Sigmoid colon (tissue), 7 donors: ENCODE measurements at regions of chr1 and their contacts with region 1.

Region 1: DNA sequence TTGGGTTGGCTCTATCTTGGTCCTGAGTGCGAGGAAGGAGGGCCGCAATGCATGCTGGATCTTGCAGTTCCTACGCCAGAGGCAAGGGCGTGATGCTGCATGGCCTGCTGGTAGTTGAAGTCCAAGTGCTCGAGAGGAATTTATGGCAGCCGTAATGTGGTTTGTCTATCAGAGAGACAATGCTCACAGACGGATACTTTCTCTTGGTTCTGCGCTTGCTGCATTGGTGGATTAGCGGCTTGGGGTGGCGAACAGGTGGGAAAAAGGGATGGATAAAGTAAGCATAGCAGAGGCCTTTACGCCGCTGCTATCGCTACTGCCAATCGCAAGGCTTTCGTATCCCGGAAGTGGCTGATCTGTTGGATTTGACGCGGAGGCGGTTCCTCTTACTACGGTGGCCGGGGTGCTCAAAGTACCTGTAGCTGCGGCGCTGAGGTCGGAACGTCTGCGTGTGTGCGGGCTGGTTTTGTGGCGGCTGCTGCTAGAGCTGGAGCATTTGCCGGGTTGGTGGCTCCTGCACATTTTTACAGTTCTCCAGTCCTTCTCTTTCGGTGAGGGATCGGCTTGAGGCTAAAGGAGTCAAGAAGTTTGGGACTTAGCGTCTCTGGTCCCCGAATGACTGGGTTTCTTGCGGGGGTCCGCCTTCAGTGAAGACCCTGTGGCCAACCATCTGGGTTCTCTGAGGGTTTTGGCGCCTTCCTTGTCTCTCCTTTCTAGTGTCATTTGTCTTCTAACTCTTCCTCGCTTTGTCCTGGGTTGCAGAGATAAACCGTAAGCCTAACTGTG is at the start of gene ATG4C:
- DNase-seq: peak; percentile 98
- H3K4me3 ChIP-seq: peak within 1 kb of the TSS; percentile 62 to 78 (median 71)
- H3K27ac ChIP-seq: peak within 1 kb of the TSS; percentile 87 to 95 (median 92)
- H3K4me1 ChIP-seq: peaks cover 0 to 17% (median 8%) of the 10 kb centered on the region in 4 donors
- H3K27me3 ChIP-seq: no peaks in the 10 kb centered on the region
- CTCF ChIP-seq: peak in 3 of 4 experiments; percentile 9 to 31 (median 12)
- EP300 ChIP-seq: no peak
- POLR2A ChIP-seq: peak; percentile 11 to 66
- total RNA-seq, gene ATG4C: 4.8 to 15.5 (median 11.8) TPM

Region 2: DNA sequence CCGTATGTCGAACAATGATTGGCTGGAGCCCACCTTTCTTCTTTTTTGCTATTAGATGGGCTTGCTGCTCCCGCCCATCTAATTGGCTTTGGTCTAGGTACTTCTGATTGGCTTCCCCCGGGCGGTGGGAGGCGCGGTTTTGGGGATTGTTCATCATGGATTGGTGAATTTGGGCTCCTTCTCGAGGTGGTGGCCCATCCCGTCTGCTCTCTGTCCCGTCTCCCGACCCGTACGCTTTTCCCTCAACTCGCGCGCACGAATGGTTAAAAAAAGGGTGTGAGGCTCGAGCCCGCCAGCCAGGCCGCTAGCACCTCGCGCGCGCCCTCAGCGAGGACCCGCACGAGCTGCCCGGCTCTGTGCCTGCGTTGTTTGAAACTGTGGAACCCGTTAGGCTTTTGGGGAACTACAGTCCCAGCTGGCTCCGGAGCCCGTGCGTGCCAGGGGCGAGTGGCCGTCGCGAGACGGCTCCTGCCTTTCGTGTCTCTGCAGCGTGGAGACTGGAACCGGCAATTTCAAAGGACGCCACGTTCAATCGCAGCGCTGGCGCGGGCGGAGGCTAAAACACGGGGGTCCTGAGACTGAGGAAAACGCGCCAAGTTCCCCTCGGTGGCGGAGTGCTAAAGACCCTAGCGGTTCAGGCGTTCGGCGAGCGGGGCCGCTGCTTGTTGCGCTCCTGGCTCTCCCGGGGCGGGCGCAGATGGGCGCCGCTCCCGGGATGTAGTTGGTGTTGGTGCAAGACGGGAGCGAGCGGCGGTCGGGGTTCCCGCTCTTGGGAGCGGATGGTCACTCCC is 347.3 kb before region 1 on chr1 and contains the start of gene USP1:
- intact Hi-C with region 1: loop called (anchors 5 kb)
- DNase-seq: peak; percentile 99
- H3K4me3 ChIP-seq: peak within 1 kb of the TSS; percentile 83 to 96 (median 88)
- H3K27ac ChIP-seq: peak within 1 kb of the TSS; percentile 92 to 100 (median 98)
- H3K4me1 ChIP-seq: peaks cover 0 to 40% (median 31%) of the 10 kb centered on the region in 4 donors
- H3K27me3 ChIP-seq: no peaks in the 10 kb centered on the region
- CTCF ChIP-seq: no peak
- EP300 ChIP-seq: no peak
- POLR2A ChIP-seq: no peak
- total RNA-seq, gene USP1: 20.5 to 35.7 (median 27.6) TPM

Region 3: DNA sequence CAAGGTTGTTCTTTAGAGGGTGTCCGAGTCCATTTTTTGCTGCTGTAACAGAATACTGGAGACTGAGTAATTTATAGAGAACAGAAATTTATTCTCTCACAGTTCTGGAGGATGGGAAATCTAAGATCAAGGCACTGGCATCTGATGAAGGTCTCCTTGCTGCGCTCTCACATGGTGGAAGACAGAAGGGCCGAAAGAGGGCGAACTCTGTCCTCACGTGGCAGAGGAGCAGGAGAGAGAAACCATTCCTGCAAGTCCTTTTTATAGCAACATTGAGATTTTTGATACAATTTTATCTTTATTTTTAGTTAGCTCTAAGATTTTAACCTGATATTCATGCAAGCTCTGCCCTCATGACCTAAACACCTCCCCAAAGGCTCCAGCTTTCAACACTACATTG is 48.4 kb after region 1 on chr1:
- intact Hi-C with region 1: no loop called
- DNase-seq: no peak
- H3K4me3 ChIP-seq: no peak overlapping the region
- H3K27ac ChIP-seq: no peak overlapping the region
- H3K4me1 ChIP-seq: no peaks in the 10 kb centered on the region
- H3K27me3 ChIP-seq: no peaks in the 10 kb centered on the region
- CTCF ChIP-seq: no peak
- EP300 ChIP-seq: no peak
- POLR2A ChIP-seq: no peak